ENCODE measurements at regions of chr1 and their contacts with region 1.

Region 1: GRCh38 chr1:21573971-21574465 is 64.8 kb downstream of the ALPL start:
- DNase-seq: peak; percentile 78 to 94 (median 87)
- H3K4me3 ChIP-seq: no peak overlapping the region
- H3K27ac ChIP-seq: peak overlapping the region in 3 of 5 donors; percentile 10 to 75 (median 62)
- H3K4me1 ChIP-seq: no peaks in the 10 kb centered on the region
- H3K27me3 ChIP-seq: no peaks in the 10 kb centered on the region
- CTCF ChIP-seq: peak; percentile 26 to 77 (median 68)
- POLR2A ChIP-seq: no peak

Region 2: DNA sequence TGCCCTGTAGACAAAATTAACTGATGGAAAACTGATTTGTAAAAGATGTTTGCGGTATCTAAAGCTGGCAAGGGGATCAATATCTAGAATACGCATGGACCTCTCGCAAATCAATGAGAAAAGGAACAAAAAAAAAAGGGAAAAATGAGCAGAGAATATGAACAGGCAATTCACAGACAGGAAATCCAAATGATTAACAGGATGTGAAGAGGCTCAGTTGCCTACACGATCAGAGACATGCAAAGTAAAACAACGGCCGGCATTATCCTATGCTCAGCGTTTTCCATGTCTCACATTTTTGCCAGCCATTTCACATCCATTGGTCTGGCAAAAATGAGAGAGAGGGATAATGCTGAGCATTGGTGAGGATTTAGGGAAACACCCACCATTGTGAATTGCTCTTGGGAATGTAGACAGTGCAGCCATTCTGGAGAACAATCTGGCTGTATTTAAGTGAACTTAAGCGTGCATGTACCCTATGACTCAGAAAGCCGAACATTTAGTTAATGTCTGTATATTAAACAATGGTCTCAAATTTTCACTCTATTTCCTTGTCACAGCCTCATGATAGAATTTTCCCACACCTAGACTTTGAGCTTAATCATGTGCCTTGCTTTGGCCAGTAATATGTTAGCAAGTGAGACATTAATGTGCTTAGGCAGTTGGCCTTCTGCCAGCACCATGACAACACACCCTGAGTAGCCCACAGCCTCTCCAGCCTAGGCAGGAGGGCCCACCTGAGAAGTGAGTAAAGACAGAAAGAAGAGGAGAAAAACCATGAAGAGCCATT is 195.1 kb before region 1 on chr1:
- intact Hi-C with region 1: loop called in 1 of 2 experiments (anchors 10 kb)
- DNase-seq: no peak
- H3K4me3 ChIP-seq: no peak overlapping the region
- H3K27ac ChIP-seq: no peak overlapping the region
- H3K4me1 ChIP-seq: no peaks in the 10 kb centered on the region
- H3K27me3 ChIP-seq: peaks cover 14% of the 10 kb centered on the region
- CTCF ChIP-seq: no peak
- POLR2A ChIP-seq: no peak

Region 3: GRCh38 chr1:21508580-21509350 is 65.3 kb before region 1 on chr1:
- intact Hi-C with region 1: loop called in 1 of 2 experiments (anchors 5 kb)
- DNase-seq: peak; percentile 64 to 87 (median 84)
- H3K4me3 ChIP-seq: peak overlapping the region in 2 of 4 donors; percentile 16 to 51
- H3K27ac ChIP-seq: peak overlapping the region in 3 of 5 donors; percentile 57 to 65 (median 62)
- H3K4me1 ChIP-seq: peaks cover 8 to 31% of the 10 kb centered on the region in 2 donors
- H3K27me3 ChIP-seq: no peaks in the 10 kb centered on the region
- CTCF ChIP-seq: peak; percentile 18 to 74 (median 56)
- POLR2A ChIP-seq: no peak

Measured in adrenal gland (tissue), 19 donors.